ENCODE measurements at regions of chr11 and their contacts with region 1.

Region 1: GRCh38 chr11:107999759-108000455 is 8.8 kb upstream of the CUL5 start:
- DNase-seq: peak; percentile 58 to 84 (median 70)
- ATAC-seq: peak; percentile 99
- H3K4me3 ChIP-seq: no peak overlapping the region
- H3K27ac ChIP-seq: no peak overlapping the region
- H3K4me1 ChIP-seq: 0 out of 5 replicates have a peak, but pooled peaks cover 0 to 3% of the 10 kb centered on the region in 2 experiments
- H3K27me3 ChIP-seq: no peaks in the 10 kb centered on the region; a peak in 1 of 5 replicates
- CTCF ChIP-seq: peak; percentile 87 to 99 (median 97)
- EP300 ChIP-seq: no peak
- POLR2A ChIP-seq: no peak
- RAD21 ChIP-seq: peak; percentile 60 to 81

Region 2: DNA sequence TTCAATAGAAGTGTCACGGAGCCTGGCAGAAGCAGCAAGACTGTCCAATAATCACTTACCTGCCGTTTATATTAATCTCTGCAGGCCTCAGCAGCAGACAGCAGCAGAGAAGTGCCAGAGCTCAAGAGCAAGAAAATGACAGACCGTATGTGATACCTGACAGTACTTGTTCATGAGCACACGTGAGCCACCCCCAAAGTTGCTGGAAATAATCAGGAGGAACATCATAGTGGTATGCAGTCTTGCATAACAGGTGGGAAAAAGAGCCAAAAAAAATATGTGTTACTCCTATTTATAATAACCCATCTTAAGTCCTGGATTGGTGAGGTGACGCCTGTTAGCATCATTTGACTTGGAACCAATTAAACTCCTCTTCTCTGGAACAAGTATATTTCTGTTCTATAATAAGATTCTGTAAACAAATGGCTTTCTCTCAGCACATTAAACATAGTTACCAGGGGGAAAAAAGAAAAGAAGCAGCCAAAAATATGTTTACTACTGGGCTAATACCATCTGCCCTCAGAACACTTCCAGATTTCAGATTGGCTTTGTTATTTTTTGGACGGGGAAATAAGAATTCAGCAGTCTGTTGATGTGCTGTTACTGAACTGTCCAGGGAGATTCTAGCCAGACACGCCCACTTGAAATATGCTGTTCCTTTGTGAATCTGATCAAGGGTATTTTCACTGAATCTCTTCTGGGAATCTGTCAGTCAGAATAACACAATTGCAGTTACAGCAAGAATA is 280.2 kb before region 1 on chr11:
- CTCF ChIA-PET with region 1: no interaction called
- POLR2A ChIA-PET with region 1: no interaction called
- in situ Hi-C with region 1: no loop called
- intact Hi-C with region 1: no loop called
- DNase-seq: no peak
- ATAC-seq: no peak
- H3K4me3 ChIP-seq: no peak overlapping the region
- H3K27ac ChIP-seq: no peak overlapping the region
- H3K4me1 ChIP-seq: no peaks in the 10 kb centered on the region
- H3K27me3 ChIP-seq: peaks cover 4 to 9% of the 10 kb centered on the region in 2 experiments; a peak in 3 of 5 replicates
- CTCF ChIP-seq: no peak
- EP300 ChIP-seq: no peak
- POLR2A ChIP-seq: no peak
- RAD21 ChIP-seq: no peak

Region 3: GRCh38 chr11:107969219-107969618 is 30.7 kb before region 1 on chr11:
- CTCF ChIA-PET with region 1: no interaction called
- POLR2A ChIA-PET with region 1: no interaction called
- in situ Hi-C with region 1: no loop called
- intact Hi-C with region 1: no loop called
- DNase-seq: peak; percentile 10 to 40 (median 26)
- ATAC-seq: peak; percentile 92
- H3K4me3 ChIP-seq: no peak overlapping the region
- H3K27ac ChIP-seq: no peak overlapping the region
- H3K4me1 ChIP-seq: no peaks in the 10 kb centered on the region
- H3K27me3 ChIP-seq: peaks cover 3 to 15% of the 10 kb centered on the region in 2 experiments; a peak in 3 of 5 replicates
- CTCF ChIP-seq: no peak
- EP300 ChIP-seq: no peak
- POLR2A ChIP-seq: no peak
- RAD21 ChIP-seq: no peak

Region 4: GRCh38 chr11:108037636-108038035 is 37.7 kb after region 1 on chr11:
- CTCF ChIA-PET with region 1: no interaction called
- POLR2A ChIA-PET with region 1: no interaction called
- in situ Hi-C with region 1: no loop called
- intact Hi-C with region 1: no loop called
- DNase-seq: no peak
- ATAC-seq: no peak
- H3K4me3 ChIP-seq: no peak overlapping the region
- H3K27ac ChIP-seq: no peak overlapping the region
- H3K4me1 ChIP-seq: peaks cover 0 to 5% of the 10 kb centered on the region in 2 experiments; a peak in 2 of 5 replicates
- H3K27me3 ChIP-seq: no peaks in the 10 kb centered on the region
- CTCF ChIP-seq: no peak
- EP300 ChIP-seq: no peak
- POLR2A ChIP-seq: no peak
- RAD21 ChIP-seq: no peak

Region 5: GRCh38 chr11:108664730-108665525 is 665.0 kb after region 1 on chr11 and contains the start of gene DDX10:
- CTCF ChIA-PET with region 1: no interaction called
- POLR2A ChIA-PET with region 1: no interaction called
- in situ Hi-C with region 1: no loop called
- intact Hi-C with region 1: loop called (anchors 2 kb)
- DNase-seq: peak; percentile 97 to 99 (median 98)
- ATAC-seq: peak; percentile 95
- H3K4me3 ChIP-seq: peak within 1 kb of the TSS; percentile 84
- H3K27ac ChIP-seq: peak within 1 kb of the TSS; percentile 79
- H3K4me1 ChIP-seq: peaks cover 10 to 17% of the 10 kb centered on the region in 2 experiments; a peak in 4 of 5 replicates
- H3K27me3 ChIP-seq: no peaks in the 10 kb centered on the region
- CTCF ChIP-seq: peak; percentile 9 to 43 (median 22); a peak in 2 of 6 replicates
- EP300 ChIP-seq: no peak
- POLR2A ChIP-seq: peak; percentile 85
- RAD21 ChIP-seq: no peak; a peak in 1 of 4 replicates
- polyA plus RNA-seq, gene DDX10: 33.9 to 40.8 TPM